K562 (cell line): ENCODE measurements at regions of chr5 and their contacts with region 1.

Region 1: DNA sequence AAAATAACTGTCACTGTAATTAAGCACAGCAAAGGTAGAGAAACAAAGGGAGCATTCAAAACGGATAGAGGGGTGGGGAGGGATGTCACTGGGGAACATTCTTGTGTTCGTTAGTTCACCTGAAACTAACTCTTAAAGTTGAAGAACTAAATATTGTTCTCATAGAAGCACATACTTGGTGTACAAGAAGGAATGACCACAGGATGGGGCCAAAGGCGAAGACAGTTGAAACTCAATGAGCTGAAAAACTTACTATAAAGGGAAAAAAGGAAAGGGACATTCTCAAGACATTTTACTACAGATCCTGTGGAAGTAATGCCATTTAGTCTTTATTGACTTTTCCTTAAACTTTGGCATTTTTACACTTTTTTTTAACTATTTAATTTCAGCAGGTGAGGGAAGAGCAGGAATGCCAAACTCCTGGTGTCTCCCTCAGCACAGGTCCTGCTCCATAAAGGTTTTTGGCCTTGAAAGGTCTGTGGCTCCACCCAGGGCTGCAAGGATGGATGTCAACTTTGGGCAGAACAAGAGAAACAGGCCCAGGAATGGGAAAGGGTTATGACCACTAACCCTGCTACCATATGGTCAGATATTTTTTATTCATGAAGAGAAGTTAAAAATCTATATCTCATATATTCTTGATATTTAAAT is 197.6 kb upstream of the RASA1 start:
- DNase-seq: peak in 2 of 4 experiments; percentile 17 to 36
- ATAC-seq: peak; percentile 87
- H3K4me3 ChIP-seq: no peak overlapping the region
- H3K27ac ChIP-seq: no peak overlapping the region
- H3K4me1 ChIP-seq: no peaks in the 10 kb centered on the region; a peak in 1 of 5 replicates
- H3K27me3 ChIP-seq: no peaks in the 10 kb centered on the region
- CTCF ChIP-seq: peak in 2 of 3 experiments; percentile 43 to 65; a peak in 4 of 6 replicates
- EP300 ChIP-seq: no peak
- POLR2A ChIP-seq: no peak
- RAD21 ChIP-seq: peak; percentile 77 to 83

Region 2: DNA sequence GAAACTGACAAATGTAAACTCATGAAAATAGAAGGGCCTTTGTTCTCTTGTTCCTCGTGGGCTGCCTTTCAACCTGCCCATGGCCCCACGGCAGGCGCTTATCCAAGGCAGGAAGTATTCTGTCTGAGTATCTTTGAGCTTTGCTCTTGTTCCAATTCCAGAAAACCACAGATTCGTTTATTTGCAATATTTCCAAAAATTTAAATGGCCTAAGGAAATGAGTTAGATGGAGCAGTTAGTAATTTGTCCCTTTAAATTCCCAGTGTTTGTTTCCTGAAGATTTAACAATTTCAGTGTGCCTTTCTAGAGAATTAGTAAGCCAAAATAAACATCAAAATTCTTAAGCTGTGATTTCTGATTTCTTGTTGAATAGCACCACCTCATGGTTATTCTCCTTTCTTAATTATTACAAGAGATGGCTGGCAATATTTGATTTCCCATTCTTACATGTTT is 101.8 kb before region 1 on chr5:
- CTCF ChIA-PET with region 1: no interaction called
- POLR2A ChIA-PET with region 1: no interaction called
- in situ Hi-C with region 1: no loop called
- intact Hi-C with region 1: no loop called
- DNase-seq: peak in 2 of 4 experiments; percentile 5 to 10
- ATAC-seq: no peak
- H3K4me3 ChIP-seq: no peak overlapping the region
- H3K27ac ChIP-seq: no peak overlapping the region
- H3K4me1 ChIP-seq: no peaks in the 10 kb centered on the region
- H3K27me3 ChIP-seq: no peaks in the 10 kb centered on the region
- CTCF ChIP-seq: peak in 2 of 3 experiments; percentile 8 to 44; a peak in 3 of 6 replicates
- EP300 ChIP-seq: no peak
- POLR2A ChIP-seq: no peak
- RAD21 ChIP-seq: peak; percentile 49 to 63

Region 3: DNA sequence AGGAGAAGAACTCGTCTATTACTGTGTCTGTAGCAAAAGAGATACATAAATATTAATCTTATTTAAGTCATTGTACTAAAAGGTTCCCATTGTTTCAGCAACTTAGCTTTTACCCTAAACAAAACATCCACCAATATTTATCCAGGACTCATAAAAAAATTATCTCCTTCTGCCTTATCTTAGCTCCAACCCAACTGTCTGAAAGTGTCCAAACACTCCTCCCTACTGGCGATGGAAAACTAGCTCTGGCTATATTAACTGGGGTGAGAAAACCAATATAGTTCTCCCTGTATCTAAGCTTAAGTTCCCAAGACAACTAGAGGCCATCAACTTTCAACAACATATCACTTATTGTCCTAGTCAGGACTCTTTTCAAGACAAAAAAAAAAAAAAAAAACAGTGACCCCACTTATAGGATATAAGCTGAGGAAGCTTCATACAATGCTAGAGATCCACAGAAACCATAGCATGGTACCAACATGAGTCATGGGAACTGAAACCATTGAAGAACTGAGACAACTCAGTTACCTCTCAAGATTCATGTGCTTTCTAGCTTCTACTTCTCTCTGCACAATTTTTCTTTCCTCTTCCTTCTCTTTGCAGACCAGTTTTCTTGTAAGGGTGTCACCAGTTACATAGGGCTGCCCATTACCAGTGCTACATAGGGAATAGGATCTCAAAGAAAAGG is 46.9 kb after region 1 on chr5:
- CTCF ChIA-PET with region 1: no interaction called
- POLR2A ChIA-PET with region 1: no interaction called
- in situ Hi-C with region 1: no loop called
- intact Hi-C with region 1: loop called (anchors 2 kb)
- DNase-seq: peak in 1 of 4 experiments; percentile 26
- ATAC-seq: peak; percentile 43
- H3K4me3 ChIP-seq: no peak overlapping the region
- H3K27ac ChIP-seq: peak overlapping the region; percentile 56
- H3K4me1 ChIP-seq: peaks cover 7 to 62% of the 10 kb centered on the region in 2 experiments
- H3K27me3 ChIP-seq: no peaks in the 10 kb centered on the region
- CTCF ChIP-seq: peak in 1 of 3 experiments; percentile 20; a peak in 1 of 6 replicates
- EP300 ChIP-seq: peak; percentile 52; the same call in 1 of the 2 replicates
- POLR2A ChIP-seq: no peak
- RAD21 ChIP-seq: peak in 1 of 2 experiments; percentile 33; a peak in 2 of 4 replicates

Region 4: DNA sequence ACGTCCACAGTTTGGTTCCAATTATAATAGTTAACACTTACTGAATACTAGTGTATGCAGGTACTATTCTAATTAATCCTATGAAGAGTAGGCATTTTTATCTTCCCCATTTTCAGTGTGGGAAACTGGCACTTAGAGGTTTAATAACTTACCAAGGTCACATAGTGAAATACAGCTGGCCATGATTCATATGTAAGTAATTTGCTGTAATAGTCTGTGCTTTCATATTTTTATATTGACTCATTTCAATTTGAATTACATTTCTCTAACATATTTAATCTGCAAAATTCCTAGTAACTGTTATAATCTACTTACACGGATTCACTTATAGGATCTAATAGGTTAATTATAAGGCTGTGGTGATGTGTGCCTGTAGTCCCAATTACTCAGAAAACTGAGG is 323.2 kb after region 1 on chr5:
- CTCF ChIA-PET with region 1: no interaction called
- POLR2A ChIA-PET with region 1: no interaction called
- in situ Hi-C with region 1: no loop called
- intact Hi-C with region 1: loop called (anchors 5 kb)
- DNase-seq: no peak
- ATAC-seq: no peak
- H3K4me3 ChIP-seq: no peak overlapping the region
- H3K27ac ChIP-seq: no peak overlapping the region
- H3K4me1 ChIP-seq: no peaks in the 10 kb centered on the region
- H3K27me3 ChIP-seq: no peaks in the 10 kb centered on the region
- CTCF ChIP-seq: no peak
- EP300 ChIP-seq: no peak
- POLR2A ChIP-seq: no peak
- RAD21 ChIP-seq: no peak

Region 5: GRCh38 chr5:87412630-87413342 is 342.7 kb after region 1 on chr5 and contains the start of gene CCNH:
- CTCF ChIA-PET with region 1: no interaction called
- POLR2A ChIA-PET with region 1: no interaction called
- in situ Hi-C with region 1: no loop called
- intact Hi-C with region 1: loop called (anchors 5 kb)
- DNase-seq: peak; percentile 94 to 99 (median 95)
- ATAC-seq: peak; percentile 98
- H3K4me3 ChIP-seq: peak within 1 kb of the TSS; percentile 98
- H3K27ac ChIP-seq: peak within 1 kb of the TSS; percentile 98
- H3K4me1 ChIP-seq: peaks cover 0 to 6% of the 10 kb centered on the region in 2 experiments; a peak in 2 of 5 replicates
- H3K27me3 ChIP-seq: no peaks in the 10 kb centered on the region
- CTCF ChIP-seq: no peak
- EP300 ChIP-seq: peak; percentile 40
- POLR2A ChIP-seq: peak; percentile 92
- RAD21 ChIP-seq: no peak
- polyA plus RNA-seq, gene CCNH: 208 to 213 TPM